Dorsolateral prefrontal cortex (tissue), 120 donors: ENCODE measurements at regions of chr1 and their contacts with region 1.

Region 1: DNA sequence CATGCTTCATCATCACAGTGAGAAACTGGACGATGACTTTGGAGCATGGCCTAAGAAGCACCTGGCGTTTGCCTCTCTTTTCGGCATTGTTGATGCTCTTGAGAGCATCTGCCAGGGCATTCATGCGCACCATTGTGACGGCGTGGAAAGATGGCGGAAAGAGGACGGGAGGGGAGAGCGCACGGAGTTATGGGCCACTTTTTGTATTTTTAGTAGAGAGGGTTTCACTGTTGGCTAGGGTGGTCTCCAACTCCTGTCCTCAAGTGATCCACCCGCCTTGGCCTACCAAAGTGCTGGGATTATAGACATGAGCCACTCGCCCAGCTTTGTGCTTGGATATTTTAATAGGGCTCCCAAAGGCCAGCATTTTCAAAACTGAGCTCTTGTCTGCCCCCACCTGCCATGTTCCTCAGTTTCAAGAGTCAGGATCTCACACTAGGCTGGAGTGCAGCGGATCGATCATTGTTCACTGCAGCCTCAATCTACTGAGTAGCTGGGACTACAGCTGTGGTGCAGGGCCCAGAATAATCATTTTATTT is 5.3 kb downstream of the RPS8 start:
- DNase-seq: no peak
- H3K4me3 ChIP-seq: no peak overlapping the region
- H3K27ac ChIP-seq: no peak overlapping the region
- H3K27me3 ChIP-seq: no peaks in the 10 kb centered on the region
- CTCF ChIP-seq: no peak

Region 2: GRCh38 chr1:44739361-44740178 is 41.1 kb before region 1 on chr1 and contains the start of gene KIF2C:
- intact Hi-C with region 1: loop called (anchors 1 to 5 kb)
- DNase-seq: peak; percentile 93 to 98 (median 96)
- H3K4me3 ChIP-seq: peak within 1 kb of the TSS; percentile 49 to 86 (median 68)
- H3K27ac ChIP-seq: peak within 1 kb of the TSS; percentile 11 to 96 (median 88)
- H3K27me3 ChIP-seq: no peaks in the 10 kb centered on the region
- CTCF ChIP-seq: peak in 50 of 56 donors; percentile 21 to 71 (median 48)
- total RNA-seq, gene KIF2C: 0.16 to 4.3 (median 0.91) TPM

Region 3: GRCh38 chr1:45009956-45010854 is 229.6 kb after region 1 on chr1:
- intact Hi-C with region 1: no loop called
- DNase-seq: peak in 1 of 10 donors; percentile 53
- H3K4me3 ChIP-seq: peak overlapping the region; percentile 64 to 100 (median 97)
- H3K27ac ChIP-seq: peak overlapping the region in 48 of 59 donors; percentile 11 to 94 (median 86)
- H3K27me3 ChIP-seq: no peaks in the 10 kb centered on the region
- CTCF ChIP-seq: no peak